ENCODE measurements at regions of chr5 and their contacts with region 1.

Region 1: DNA sequence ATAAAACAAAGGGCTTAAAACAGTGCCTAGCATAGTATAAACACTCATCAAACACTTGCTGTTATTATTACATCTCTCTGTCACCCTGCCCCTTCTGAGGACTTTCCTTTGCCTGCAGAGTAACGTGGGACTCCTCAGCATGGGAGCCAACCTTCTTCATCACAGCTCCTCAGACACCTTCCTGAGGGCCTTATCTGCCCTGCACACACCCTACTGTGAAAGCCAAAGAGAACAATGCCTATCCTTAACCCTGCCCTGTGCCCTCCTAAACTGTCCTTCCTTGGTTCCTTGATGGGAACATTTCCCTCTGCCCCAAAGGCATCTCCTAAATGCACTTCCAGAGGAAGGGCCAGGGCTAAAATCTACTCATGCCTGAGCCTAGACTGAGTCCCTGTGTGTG is 20.6 kb upstream of the HAND1 start:
- DNase-seq: no peak
- ATAC-seq: no peak
- H3K4me3 ChIP-seq: no peak overlapping the region
- H3K4me3 Mint-ChIP-seq: no peak overlapping the region
- H3K27ac ChIP-seq: no peak overlapping the region
- H3K27ac Mint-ChIP-seq: no peak overlapping the region
- H3K4me1 ChIP-seq: no peaks in the 10 kb centered on the region
- H3K4me1 Mint-ChIP-seq: no peaks in the 10 kb centered on the region
- H3K27me3 ChIP-seq: no peaks in the 10 kb centered on the region
- H3K27me3 Mint-ChIP-seq: peaks cover 41 to 60% (median 41%) of the 10 kb centered on the region in 5 donors

Region 2: DNA sequence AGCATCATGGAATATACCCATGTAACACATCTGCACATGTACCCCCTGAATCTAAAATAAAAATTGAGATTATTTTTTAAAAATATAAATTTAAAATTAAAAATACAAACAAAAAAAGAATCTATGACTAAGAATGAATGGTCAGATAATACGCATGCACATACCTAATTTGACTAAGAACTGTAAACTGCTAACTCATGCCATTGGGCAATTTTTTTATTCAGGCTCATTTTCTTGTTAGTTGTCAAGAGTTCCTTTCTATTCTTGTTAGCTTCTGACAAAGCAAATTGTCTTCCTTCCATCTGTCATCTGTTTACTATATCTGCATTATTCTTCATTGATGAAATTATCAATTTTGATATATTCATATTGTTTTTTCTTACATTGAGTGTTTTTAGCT is 49.0 kb after region 1 on chr5:
- CTCF ChIA-PET with region 1: no interaction called
- POLR2A ChIA-PET with region 1: no interaction called
- intact Hi-C with region 1: loop called in 1 of 2 experiments (anchors 2 kb)
- DNase-seq: no peak
- ATAC-seq: no peak
- H3K4me3 ChIP-seq: no peak overlapping the region
- H3K4me3 Mint-ChIP-seq: no peak overlapping the region
- H3K27ac ChIP-seq: no peak overlapping the region
- H3K27ac Mint-ChIP-seq: no peak overlapping the region
- H3K4me1 ChIP-seq: no peaks in the 10 kb centered on the region
- H3K4me1 Mint-ChIP-seq: no peaks in the 10 kb centered on the region
- H3K27me3 ChIP-seq: no peaks in the 10 kb centered on the region
- H3K27me3 Mint-ChIP-seq: peaks cover 15 to 30% (median 25%) of the 10 kb centered on the region in 5 donors

Measured in naive thymus-derived CD4-positive, alpha-beta T cell (primary cell).